Heart left ventricle (tissue), 16 donors: ENCODE measurements at regions of chr11 and their contacts with region 1.

Region 1: GRCh38 chr11:130979386-130979972 is 63.2 kb upstream of the SNX19 start:
- DNase-seq: no peak
- ATAC-seq: no peak
- H3K4me3 ChIP-seq: no peak overlapping the region
- H3K27ac ChIP-seq: no peak overlapping the region
- H3K4me1 ChIP-seq: no peaks in the 10 kb centered on the region
- H3K27me3 ChIP-seq: peaks cover 0 to 6% (median 0%) of the 10 kb centered on the region in 9 donors
- CTCF ChIP-seq: peak; percentile 22 to 50 (median 34)
- POLR2A ChIP-seq: no peak

Region 2: GRCh38 chr11:130765951-130766649 is 213.4 kb before region 1 on chr11:
- intact Hi-C with region 1: no loop called
- DNase-seq: no peak
- ATAC-seq: no peak
- H3K4me3 ChIP-seq: no peak overlapping the region
- H3K27ac ChIP-seq: no peak overlapping the region
- H3K4me1 ChIP-seq: peaks cover 0 to 9% (median 0%) of the 10 kb centered on the region in 12 donors
- H3K27me3 ChIP-seq: no peaks in the 10 kb centered on the region
- CTCF ChIP-seq: no peak
- POLR2A ChIP-seq: no peak

Region 3: GRCh38 chr11:130916238-130916855 is 63.1 kb before region 1 on chr11 and contains the start of gene SNX19:
- intact Hi-C with region 1: loop called in 7 of 10 experiments (anchors 2 to 10 kb)
- DNase-seq: peak; percentile 93 to 97 (median 94)
- ATAC-seq: peak; percentile 95 to 99 (median 98)
- H3K4me3 ChIP-seq: peak within 1 kb of the TSS; percentile 59 to 99 (median 94)
- H3K27ac ChIP-seq: peak within 1 kb of the TSS in 11 of 12 donors; percentile 74 to 94 (median 88)
- H3K4me1 ChIP-seq: peaks cover 0 to 42% (median 26%) of the 10 kb centered on the region in 12 donors
- H3K27me3 ChIP-seq: no peaks in the 10 kb centered on the region
- CTCF ChIP-seq: peak; percentile 93 to 100 (median 98)
- POLR2A ChIP-seq: peak; percentile 57 to 88
- total RNA-seq, gene SNX19: 35.3 to 121 (median 58.3) TPM

Region 4: DNA sequence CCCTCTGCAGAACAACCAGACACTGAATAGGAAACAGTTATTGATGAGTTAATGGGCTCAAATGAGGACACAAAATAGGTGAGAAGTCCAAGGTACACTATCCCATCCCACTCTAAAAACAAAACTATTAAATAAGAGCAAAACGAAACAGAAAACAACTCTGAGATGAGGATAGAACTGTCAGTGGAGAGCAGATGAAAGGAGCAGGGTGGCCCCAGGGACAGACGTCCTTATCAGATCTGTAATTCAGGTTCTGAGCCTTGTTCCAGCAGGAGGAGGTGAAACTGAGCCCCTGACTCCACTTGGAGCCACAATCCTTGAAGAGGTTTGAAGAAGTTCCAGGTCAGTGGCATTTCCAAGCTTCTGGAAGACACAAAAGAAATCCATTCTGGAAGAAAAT is 54.7 kb before region 1 on chr11:
- intact Hi-C with region 1: loop called (anchors 1 to 10 kb)
- DNase-seq: no peak
- ATAC-seq: no peak
- H3K4me3 ChIP-seq: no peak overlapping the region
- H3K27ac ChIP-seq: no peak overlapping the region
- H3K4me1 ChIP-seq: no peaks in the 10 kb centered on the region
- H3K27me3 ChIP-seq: no peaks in the 10 kb centered on the region
- CTCF ChIP-seq: no peak
- POLR2A ChIP-seq: no peak